B cell (primary cell): ENCODE measurements at regions of chr7 and their contacts with region 1.

Region 1: GRCh38 chr7:130758429-130759056 is 24.5 kb upstream of the KLF14 start:
- DNase-seq: peak; percentile 72
- ATAC-seq: peak; percentile 54
- H3K4me3 ChIP-seq: no peak overlapping the region
- H3K4me3 Mint-ChIP-seq: no peak overlapping the region
- H3K27ac ChIP-seq: no peak overlapping the region
- H3K27ac Mint-ChIP-seq: no peak overlapping the region
- H3K4me1 ChIP-seq: no peaks in the 10 kb centered on the region
- H3K4me1 Mint-ChIP-seq: no peaks in the 10 kb centered on the region
- H3K27me3 ChIP-seq: peaks cover 0 to 3% (median 0%) of the 10 kb centered on the region in 4 experiments
- H3K27me3 Mint-ChIP-seq: no peaks in the 10 kb centered on the region
- CTCF ChIP-seq: peak; percentile 93

Region 2: GRCh38 chr7:130063036-130063435 is 695.5 kb before region 1 on chr7:
- CTCF ChIA-PET with region 1: interaction called, 4 read pairs
- POLR2A ChIA-PET with region 1: no interaction called
- intact Hi-C with region 1: loop called (anchors 2 kb)
- DNase-seq: peak; percentile 68
- ATAC-seq: peak; percentile 36
- H3K4me3 ChIP-seq: no peak overlapping the region
- H3K4me3 Mint-ChIP-seq: no peak overlapping the region
- H3K27ac ChIP-seq: no peak overlapping the region
- H3K27ac Mint-ChIP-seq: no peak overlapping the region
- H3K4me1 ChIP-seq: no peaks in the 10 kb centered on the region
- H3K4me1 Mint-ChIP-seq: no peaks in the 10 kb centered on the region
- H3K27me3 ChIP-seq: peaks cover 0 to 4% (median 0%) of the 10 kb centered on the region in 4 experiments
- H3K27me3 Mint-ChIP-seq: peaks cover 4% of the 10 kb centered on the region
- CTCF ChIP-seq: peak; percentile 75

Region 3: DNA sequence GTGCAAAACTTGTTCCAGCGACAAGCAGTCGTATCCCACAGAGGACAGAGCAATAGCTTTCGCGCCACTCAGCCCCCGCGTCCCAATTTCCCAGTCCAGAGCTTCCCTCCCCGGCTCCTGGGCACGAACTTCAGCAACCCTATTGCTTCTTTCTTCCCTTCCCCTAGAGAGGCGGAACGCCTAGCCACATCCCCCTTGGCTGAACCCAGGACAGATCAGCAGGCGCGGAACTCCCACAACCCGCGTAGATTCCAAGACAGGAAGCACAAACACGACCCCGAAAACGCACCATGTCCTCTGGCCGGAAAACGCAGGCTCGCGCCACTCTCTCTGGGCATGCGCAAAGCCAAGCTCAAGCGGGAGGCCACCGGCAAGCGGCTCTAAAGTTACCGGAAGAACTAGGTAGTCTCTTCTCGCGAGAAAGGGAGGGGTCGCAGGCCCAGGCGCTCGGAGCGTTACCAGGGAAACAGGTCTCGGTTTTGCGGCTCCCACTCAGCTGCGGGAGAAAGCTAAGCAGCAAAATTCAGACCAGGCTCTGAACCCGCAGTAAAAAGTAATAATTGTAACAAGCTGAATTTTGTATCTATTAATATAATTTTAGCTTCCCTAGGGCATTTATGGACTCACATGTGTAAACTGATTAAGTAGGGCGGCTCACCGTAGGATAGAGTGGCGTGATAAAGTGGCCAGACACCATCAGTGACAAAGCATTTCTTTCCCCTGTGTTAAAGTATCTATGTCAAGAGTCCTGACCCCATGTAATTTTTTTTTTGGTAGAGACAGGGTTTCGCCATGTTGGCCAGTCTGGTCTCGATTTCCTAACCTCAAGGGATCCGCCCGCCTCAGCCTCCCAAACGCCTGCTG is 553.2 kb before region 1 on chr7 and contains the start of gene TMEM209:
- CTCF ChIA-PET with region 1: interaction called, 6 read pairs
- POLR2A ChIA-PET with region 1: no interaction called
- intact Hi-C with region 1: loop called (anchors 1 kb)
- DNase-seq: peak; percentile 96
- ATAC-seq: peak; percentile 97
- H3K4me3 ChIP-seq: peak within 1 kb of the TSS; percentile 83 to 100 (median 89)
- H3K4me3 Mint-ChIP-seq: peak within 1 kb of the TSS; percentile 97
- H3K27ac ChIP-seq: peak within 1 kb of the TSS; percentile 86 to 87
- H3K27ac Mint-ChIP-seq: peak within 1 kb of the TSS; percentile 96
- H3K4me1 ChIP-seq: peaks cover 4 to 14% of the 10 kb centered on the region in 2 donors
- H3K4me1 Mint-ChIP-seq: peaks cover 15% of the 10 kb centered on the region
- H3K27me3 ChIP-seq: no peaks in the 10 kb centered on the region
- H3K27me3 Mint-ChIP-seq: peaks cover 6% of the 10 kb centered on the region
- CTCF ChIP-seq: no peak
- total RNA-seq, gene TMEM209: 33.2 and 35.8 TPM in 2 replicates

Region 4: DNA sequence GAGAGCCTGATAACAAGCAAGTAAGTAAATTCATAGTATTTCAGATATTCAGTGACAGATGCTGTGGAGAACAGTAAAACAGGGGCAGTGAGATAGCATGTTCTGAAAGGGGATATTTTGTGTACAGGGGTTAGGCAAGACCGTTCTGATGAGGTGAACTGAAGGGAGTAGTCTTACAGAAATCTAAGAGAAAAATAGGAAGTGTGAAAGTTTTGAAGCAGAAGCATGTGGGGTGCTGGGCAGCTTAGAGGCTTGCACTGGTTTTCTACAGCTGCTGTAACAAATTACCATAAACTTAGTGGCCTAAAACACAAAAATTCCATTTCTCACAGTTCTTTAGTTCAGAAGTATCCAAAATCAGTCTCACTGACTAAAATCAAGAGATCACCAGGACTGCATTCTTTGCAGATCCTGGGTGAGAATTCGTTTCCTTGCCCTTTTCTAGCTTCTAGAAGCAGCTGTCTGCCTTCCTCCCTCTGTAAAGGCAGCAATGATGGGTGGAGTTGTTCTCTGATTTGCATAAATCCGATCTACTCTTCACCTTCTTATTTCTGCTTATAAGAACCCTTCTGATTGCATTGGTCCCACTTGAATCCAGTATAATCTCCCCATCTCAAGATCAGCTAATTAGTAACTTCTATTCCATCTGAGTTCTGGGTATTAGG is 17.1 kb before region 1 on chr7:
- CTCF ChIA-PET with region 1: interaction called, 30 read pairs
- POLR2A ChIA-PET with region 1: no interaction called
- intact Hi-C with region 1: no loop called
- DNase-seq: peak; percentile 77
- ATAC-seq: peak; percentile 95
- H3K4me3 ChIP-seq: peak overlapping the region in 2 of 5 experiments; percentile 15 to 24
- H3K4me3 Mint-ChIP-seq: no peak overlapping the region
- H3K27ac ChIP-seq: peak overlapping the region; percentile 41 to 50
- H3K27ac Mint-ChIP-seq: no peak overlapping the region
- H3K4me1 ChIP-seq: peaks cover 21 to 23% of the 10 kb centered on the region in 2 donors
- H3K4me1 Mint-ChIP-seq: no peaks in the 10 kb centered on the region
- H3K27me3 ChIP-seq: peaks cover 0 to 35% (median 11%) of the 10 kb centered on the region in 4 experiments
- H3K27me3 Mint-ChIP-seq: peaks cover 28% of the 10 kb centered on the region
- CTCF ChIP-seq: no peak

Region 5: GRCh38 chr7:132191418-132191817 is 1432.9 kb after region 1 on chr7:
- CTCF ChIA-PET with region 1: no interaction called
- POLR2A ChIA-PET with region 1: no interaction called
- intact Hi-C with region 1: no loop called
- DNase-seq: no peak
- ATAC-seq: no peak
- H3K4me3 ChIP-seq: no peak overlapping the region
- H3K4me3 Mint-ChIP-seq: no peak overlapping the region
- H3K27ac ChIP-seq: no peak overlapping the region
- H3K27ac Mint-ChIP-seq: no peak overlapping the region
- H3K4me1 ChIP-seq: no peaks in the 10 kb centered on the region
- H3K4me1 Mint-ChIP-seq: no peaks in the 10 kb centered on the region
- H3K27me3 ChIP-seq: no peaks in the 10 kb centered on the region
- H3K27me3 Mint-ChIP-seq: peaks cover 5% of the 10 kb centered on the region
- CTCF ChIP-seq: no peak